CD4-positive, alpha-beta memory T cell (primary cell): ENCODE measurements at regions of chr16 and their contacts with region 1.

Region 1: DNA sequence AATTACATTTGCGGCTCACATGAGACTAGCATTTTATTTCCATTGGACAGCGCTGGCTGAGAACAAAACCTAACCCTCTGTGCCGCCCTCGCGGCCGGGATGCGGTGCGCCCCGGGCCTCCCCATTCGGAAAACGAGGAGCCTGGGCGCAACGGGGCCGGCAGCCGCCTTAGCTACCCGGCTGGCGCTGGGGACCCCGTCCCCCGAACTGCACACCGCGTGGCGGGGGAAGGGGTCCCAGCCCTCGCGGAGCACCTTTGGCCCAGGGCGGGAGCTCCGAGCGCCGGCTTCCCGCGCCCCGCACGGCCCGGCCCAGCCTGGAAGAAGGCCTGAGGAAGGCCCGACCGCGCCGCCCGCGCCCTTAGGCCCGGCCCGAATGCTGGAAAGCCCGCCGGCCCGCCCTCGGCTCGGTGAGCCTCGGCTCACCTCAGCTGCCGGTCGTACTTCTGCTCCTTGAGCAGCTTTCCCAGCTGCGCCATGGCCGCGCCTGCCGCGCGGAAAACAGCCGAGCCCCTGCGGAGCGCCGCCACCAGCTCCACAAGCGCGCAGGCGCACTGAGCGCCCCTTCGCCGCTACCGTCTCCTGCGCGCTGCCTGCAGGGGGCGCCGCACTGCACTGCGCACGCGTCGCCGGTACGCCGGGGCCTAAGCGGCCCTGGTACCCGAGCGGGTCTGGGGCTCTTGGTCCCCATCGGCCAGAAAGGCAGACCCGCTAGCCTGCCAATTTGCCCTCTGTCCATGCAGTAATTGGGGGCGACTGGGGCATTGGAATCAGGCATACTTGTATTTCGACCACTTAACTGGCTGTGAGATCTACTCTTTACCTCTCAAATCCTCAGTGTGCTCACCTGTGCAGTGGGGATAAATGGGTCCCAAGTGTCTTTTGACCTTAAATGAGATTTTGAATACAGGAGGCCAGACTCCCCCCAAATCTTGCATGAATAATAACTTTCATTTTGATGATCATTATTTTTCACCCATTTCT is at the start of gene NAE1:
- DNase-seq: peak; percentile 81 to 94 (median 91)
- H3K4me3 ChIP-seq: peak within 1 kb of the TSS; percentile 25 to 64
- H3K4me3 Mint-ChIP-seq: peak within 1 kb of the TSS; percentile 76 to 84 (median 82)
- H3K27ac ChIP-seq: peak within 1 kb of the TSS; percentile 68
- H3K27ac Mint-ChIP-seq: peak within 1 kb of the TSS; percentile 38 to 82 (median 68)
- H3K4me1 ChIP-seq: peaks cover 39% of the 10 kb centered on the region
- H3K4me1 Mint-ChIP-seq: peaks cover 20 to 34% (median 26%) of the 10 kb centered on the region in 4 donors
- H3K27me3 ChIP-seq: no peaks in the 10 kb centered on the region
- H3K27me3 Mint-ChIP-seq: peaks cover under 1 to 2% of the 10 kb centered on the region in 2 donors
- total RNA-seq, gene NAE1: 93.8 to 95.3 TPM

Region 2: GRCh38 chr16:66578651-66579531 is 251.8 kb before region 1 on chr16 and contains the start of gene CMTM2:
- CTCF ChIA-PET with region 1: no interaction called
- POLR2A ChIA-PET with region 1: no interaction called
- intact Hi-C with region 1: no loop called
- DNase-seq: peak in 2 of 5 donors; percentile 21
- H3K4me3 ChIP-seq: peak within 1 kb of the TSS; percentile 5 to 47
- H3K4me3 Mint-ChIP-seq: peak within 1 kb of the TSS; percentile 66 to 80 (median 72)
- H3K27ac ChIP-seq: no peak within 1 kb of the TSS
- H3K27ac Mint-ChIP-seq: peak within 1 kb of the TSS in 1 of 7 donors; percentile 41
- H3K4me1 ChIP-seq: peaks cover 5% of the 10 kb centered on the region
- H3K4me1 Mint-ChIP-seq: peaks cover 4 to 17% (median 9%) of the 10 kb centered on the region in 4 donors
- H3K27me3 ChIP-seq: peaks cover 3% of the 10 kb centered on the region
- H3K27me3 Mint-ChIP-seq: peaks cover 2 to 6% of the 10 kb centered on the region in 2 donors
- total RNA-seq, gene CMTM2: 0.72 to 0.79 TPM

Region 3: GRCh38 chr16:66814734-66815133 is 16.0 kb before region 1 on chr16:
- CTCF ChIA-PET with region 1: interaction called, 22 read pairs
- POLR2A ChIA-PET with region 1: interaction called, 8 read pairs
- intact Hi-C with region 1: no loop called
- DNase-seq: no peak
- H3K4me3 ChIP-seq: no peak overlapping the region
- H3K4me3 Mint-ChIP-seq: no peak overlapping the region
- H3K27ac ChIP-seq: no peak overlapping the region
- H3K27ac Mint-ChIP-seq: peak overlapping the region in 3 of 7 donors; percentile 2 to 85 (median 39)
- H3K4me1 ChIP-seq: no peaks in the 10 kb centered on the region
- H3K4me1 Mint-ChIP-seq: peaks cover 0 to 2% (median 0%) of the 10 kb centered on the region in 4 donors
- H3K27me3 ChIP-seq: no peaks in the 10 kb centered on the region
- H3K27me3 Mint-ChIP-seq: no peaks in the 10 kb centered on the region

Region 4: GRCh38 chr16:66844342-66845079 is 13.8 kb after region 1 on chr16 and contains the start of gene CA7:
- CTCF ChIA-PET with region 1: interaction called, 19 read pairs
- POLR2A ChIA-PET with region 1: interaction called, 4 read pairs
- intact Hi-C with region 1: no loop called
- DNase-seq: no peak
- H3K4me3 ChIP-seq: no peak within 1 kb of the TSS
- H3K4me3 Mint-ChIP-seq: peak within 1 kb of the TSS in 7 of 8 donors; percentile 27 to 80 (median 68)
- H3K27ac ChIP-seq: no peak within 1 kb of the TSS
- H3K27ac Mint-ChIP-seq: no peak within 1 kb of the TSS
- H3K4me1 ChIP-seq: no peaks in the 10 kb centered on the region
- H3K4me1 Mint-ChIP-seq: peaks cover 2 to 10% (median 8%) of the 10 kb centered on the region in 4 donors
- H3K27me3 ChIP-seq: peaks cover 17% of the 10 kb centered on the region
- H3K27me3 Mint-ChIP-seq: peaks cover 31 to 33% of the 10 kb centered on the region in 2 donors
- total RNA-seq, gene CA7: not detected

Region 5: DNA sequence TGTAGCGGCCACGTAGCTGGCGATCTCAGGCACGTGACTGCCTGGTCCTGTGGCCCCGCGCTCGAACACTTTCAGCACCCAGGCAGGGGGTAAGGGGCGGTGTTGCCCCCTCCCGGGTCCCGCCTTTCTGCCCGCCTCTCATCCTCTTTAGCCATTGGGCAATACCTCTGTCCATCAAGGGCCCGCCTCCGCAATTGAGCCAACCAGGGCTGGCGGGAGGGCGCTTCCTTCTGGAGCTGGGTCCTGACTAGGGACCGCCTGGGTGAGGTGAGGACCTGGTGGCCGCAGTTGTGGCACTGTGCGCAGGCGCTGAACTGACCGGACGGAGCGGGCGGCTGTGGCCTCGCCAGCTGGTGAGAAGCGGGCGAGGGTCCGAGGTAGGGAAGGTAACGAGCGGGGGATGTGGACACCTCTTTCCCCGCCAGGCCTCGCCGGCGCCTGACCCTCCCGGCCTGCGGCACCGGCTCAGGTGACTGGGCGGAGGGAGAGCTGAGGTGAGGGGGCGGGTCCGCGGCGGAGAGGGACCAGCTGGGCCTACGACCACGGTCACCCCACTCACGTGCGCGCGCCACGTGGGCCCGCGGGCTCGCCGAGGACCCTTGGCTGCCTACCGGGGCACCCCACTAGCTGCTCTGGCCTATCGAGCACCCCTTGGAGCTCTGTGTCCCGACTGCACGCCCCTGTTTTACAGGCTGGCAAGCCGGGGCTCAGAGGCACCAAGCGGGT is 49.7 kb after region 1 on chr16 and contains the start of gene PDP2:
- CTCF ChIA-PET with region 1: interaction called, 32 read pairs
- POLR2A ChIA-PET with region 1: interaction called, 18 read pairs
- intact Hi-C with region 1: no loop called
- DNase-seq: peak; percentile 88 to 91 (median 89)
- H3K4me3 ChIP-seq: peak within 1 kb of the TSS; percentile 66 to 80
- H3K4me3 Mint-ChIP-seq: peak within 1 kb of the TSS; percentile 97 to 100 (median 99)
- H3K27ac ChIP-seq: peak within 1 kb of the TSS; percentile 54
- H3K27ac Mint-ChIP-seq: peak within 1 kb of the TSS; percentile 79 to 96 (median 94)
- H3K4me1 ChIP-seq: peaks cover 22% of the 10 kb centered on the region
- H3K4me1 Mint-ChIP-seq: peaks cover 13 to 39% (median 27%) of the 10 kb centered on the region in 4 donors
- H3K27me3 ChIP-seq: no peaks in the 10 kb centered on the region
- H3K27me3 Mint-ChIP-seq: no peaks in the 10 kb centered on the region
- total RNA-seq, gene PDP2: 16.3 to 19.3 TPM

Region 6: GRCh38 chr16:66934153-66934838 is 103.6 kb after region 1 on chr16 and contains the start of gene CIAO2B:
- CTCF ChIA-PET with region 1: interaction called, 5 read pairs
- POLR2A ChIA-PET with region 1: interaction called, 10 read pairs
- intact Hi-C with region 1: no loop called
- DNase-seq: peak; percentile 88 to 93 (median 90)
- H3K4me3 ChIP-seq: peak within 1 kb of the TSS; percentile 88 to 98
- H3K4me3 Mint-ChIP-seq: peak within 1 kb of the TSS; percentile 93 to 100 (median 99)
- H3K27ac ChIP-seq: peak within 1 kb of the TSS; percentile 97
- H3K27ac Mint-ChIP-seq: peak within 1 kb of the TSS; percentile 97 to 99 (median 99)
- H3K4me1 ChIP-seq: peaks cover 49% of the 10 kb centered on the region
- H3K4me1 Mint-ChIP-seq: peaks cover 31 to 72% (median 51%) of the 10 kb centered on the region in 4 donors
- H3K27me3 ChIP-seq: no peaks in the 10 kb centered on the region
- H3K27me3 Mint-ChIP-seq: no peaks in the 10 kb centered on the region
- total RNA-seq, gene CIAO2B: 72.7 to 75.0 TPM